H1 (cell line): ENCODE measurements at regions of chr14 and their contacts with region 1.

Region 1: DNA sequence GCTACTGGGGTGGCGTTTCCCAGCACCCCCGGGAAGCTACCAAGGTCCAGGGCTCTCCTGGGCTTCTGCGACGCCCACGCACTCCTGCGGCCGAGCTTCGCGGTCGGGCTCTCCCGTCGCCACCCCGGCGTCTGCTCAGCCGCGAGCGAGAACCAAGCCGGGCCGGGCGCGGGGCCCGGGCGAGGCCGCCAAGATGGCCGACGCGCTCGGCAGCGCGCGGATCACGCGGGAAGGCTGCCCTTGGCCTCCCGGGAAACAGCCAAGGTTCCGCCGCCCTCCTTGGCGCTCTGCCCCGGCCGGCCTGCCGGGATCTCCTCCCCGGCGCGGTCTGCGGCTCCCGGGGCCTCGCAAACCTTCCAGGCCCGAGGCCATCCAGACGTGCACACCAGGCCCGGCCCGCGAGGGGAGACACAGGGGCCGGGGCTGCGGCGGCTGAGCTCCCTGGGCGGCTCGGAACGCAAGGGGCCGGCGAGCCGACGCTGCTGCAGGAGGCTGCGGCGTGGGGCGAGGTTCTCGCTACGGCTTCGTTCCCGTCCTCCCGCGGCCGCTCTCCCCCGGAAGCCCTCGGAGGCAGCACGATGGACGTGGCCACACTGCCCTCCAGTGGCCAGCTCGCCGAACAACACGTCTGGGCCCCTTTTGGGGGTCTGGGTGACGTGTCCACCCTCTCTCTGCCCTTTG is 23.5 kb upstream of the ZFP36L1 start:
- DNase-seq: peak in 1 of 2 experiments; percentile 99
- H3K4me3 ChIP-seq: peak overlapping the region; percentile 3 to 59 (median 44); a peak in 7 of 8 replicates
- H3K27ac ChIP-seq: peak overlapping the region; percentile 76; the same call in 1 of the 2 replicates
- H3K4me1 ChIP-seq: peaks cover 6 to 37% (median 28%) of the 10 kb centered on the region in 4 experiments
- H3K27me3 ChIP-seq: peaks cover 0 to 3% (median 2%) of the 10 kb centered on the region in 4 experiments; a peak in 2 of 7 replicates
- CTCF ChIP-seq: peak; percentile 89 to 97 (median 91)
- EP300 ChIP-seq: no peak
- POLR2A ChIP-seq: peak in 1 of 2 experiments; percentile 40; a peak in 2 of 3 replicates
- RAD21 ChIP-seq: peak; percentile 99 to 100

Region 2: DNA sequence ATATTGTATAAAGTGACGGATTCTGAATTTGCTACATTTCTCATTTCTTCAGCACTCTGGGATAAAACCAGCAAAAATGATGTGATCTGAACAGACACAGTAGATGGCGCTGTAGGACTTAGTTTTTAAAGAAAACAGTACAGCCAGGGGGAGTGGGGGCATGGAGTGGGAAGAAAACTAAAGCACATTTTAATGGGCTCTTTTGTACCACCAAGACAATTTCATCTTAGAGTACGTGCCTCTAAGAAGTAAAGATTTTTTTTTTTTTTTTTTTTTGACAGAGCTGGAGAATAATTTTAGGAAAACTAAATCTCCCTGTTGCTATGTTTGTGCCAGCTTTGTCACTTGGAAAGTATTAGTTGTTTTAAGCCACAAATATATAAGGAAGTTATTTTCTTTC is 872.5 kb before region 1 on chr14:
- CTCF ChIA-PET with region 1: interaction called, 17 read pairs
- POLR2A ChIA-PET with region 1: no interaction called
- DNase-seq: peak; percentile 15 to 60
- H3K4me3 ChIP-seq: no peak overlapping the region
- H3K27ac ChIP-seq: no peak overlapping the region
- H3K4me1 ChIP-seq: peaks cover 4 to 15% (median 6%) of the 10 kb centered on the region in 4 experiments; a peak in 6 of 7 replicates
- H3K27me3 ChIP-seq: no peaks in the 10 kb centered on the region
- CTCF ChIP-seq: peak in 2 of 3 experiments; percentile 65 to 70; a peak in 3 of 4 replicates
- EP300 ChIP-seq: no peak
- POLR2A ChIP-seq: no peak
- RAD21 ChIP-seq: peak; percentile 93 to 94

Region 3: DNA sequence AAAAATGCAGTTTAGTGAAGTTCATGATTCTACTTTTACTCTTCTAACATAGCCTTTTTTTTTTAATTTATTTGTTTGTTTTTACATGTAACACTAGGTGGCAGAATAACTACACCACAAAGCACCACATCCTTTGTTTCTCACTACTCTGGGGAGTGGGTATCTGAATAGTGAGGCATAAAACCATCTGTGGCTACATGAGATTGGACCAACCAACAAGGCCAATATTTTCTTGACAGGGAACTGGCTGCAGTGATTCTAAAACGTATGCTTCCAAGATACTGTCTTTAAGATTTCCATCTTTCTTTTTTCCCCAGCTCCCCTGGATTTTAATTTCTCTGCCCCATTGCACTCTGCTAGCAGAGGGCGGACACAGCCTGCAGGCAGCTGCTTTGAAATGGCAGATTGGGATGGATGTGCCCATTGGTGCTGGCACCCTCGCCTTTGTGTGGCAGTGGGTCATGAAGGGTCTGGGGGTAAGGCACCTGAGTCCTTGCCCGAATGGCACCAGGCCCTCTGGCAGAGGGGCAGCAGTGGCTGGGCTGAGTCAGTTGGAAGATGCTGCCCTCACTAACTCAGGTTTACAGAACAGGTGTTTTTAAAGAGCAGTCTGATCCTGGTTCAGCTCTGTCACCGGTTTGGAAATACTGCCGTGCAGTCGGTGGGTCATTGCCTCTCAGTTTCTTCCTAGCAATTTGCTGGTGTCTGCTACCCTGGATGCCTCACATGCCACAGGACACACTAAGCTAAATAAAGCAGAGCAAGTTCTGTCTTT is 567.7 kb before region 1 on chr14:
- CTCF ChIA-PET with region 1: interaction called, 76 read pairs
- POLR2A ChIA-PET with region 1: interaction called, 15 read pairs
- DNase-seq: peak in 1 of 2 experiments; percentile 65
- H3K4me3 ChIP-seq: no peak overlapping the region
- H3K27ac ChIP-seq: no peak overlapping the region
- H3K4me1 ChIP-seq: peaks cover 2 to 20% (median 13%) of the 10 kb centered on the region in 4 experiments; a peak in 5 of 7 replicates
- H3K27me3 ChIP-seq: no peaks in the 10 kb centered on the region
- CTCF ChIP-seq: peak in 2 of 3 experiments; percentile 48 to 49; a peak in 2 of 4 replicates
- EP300 ChIP-seq: no peak
- POLR2A ChIP-seq: no peak
- RAD21 ChIP-seq: peak; percentile 86 to 91

Region 4: DNA sequence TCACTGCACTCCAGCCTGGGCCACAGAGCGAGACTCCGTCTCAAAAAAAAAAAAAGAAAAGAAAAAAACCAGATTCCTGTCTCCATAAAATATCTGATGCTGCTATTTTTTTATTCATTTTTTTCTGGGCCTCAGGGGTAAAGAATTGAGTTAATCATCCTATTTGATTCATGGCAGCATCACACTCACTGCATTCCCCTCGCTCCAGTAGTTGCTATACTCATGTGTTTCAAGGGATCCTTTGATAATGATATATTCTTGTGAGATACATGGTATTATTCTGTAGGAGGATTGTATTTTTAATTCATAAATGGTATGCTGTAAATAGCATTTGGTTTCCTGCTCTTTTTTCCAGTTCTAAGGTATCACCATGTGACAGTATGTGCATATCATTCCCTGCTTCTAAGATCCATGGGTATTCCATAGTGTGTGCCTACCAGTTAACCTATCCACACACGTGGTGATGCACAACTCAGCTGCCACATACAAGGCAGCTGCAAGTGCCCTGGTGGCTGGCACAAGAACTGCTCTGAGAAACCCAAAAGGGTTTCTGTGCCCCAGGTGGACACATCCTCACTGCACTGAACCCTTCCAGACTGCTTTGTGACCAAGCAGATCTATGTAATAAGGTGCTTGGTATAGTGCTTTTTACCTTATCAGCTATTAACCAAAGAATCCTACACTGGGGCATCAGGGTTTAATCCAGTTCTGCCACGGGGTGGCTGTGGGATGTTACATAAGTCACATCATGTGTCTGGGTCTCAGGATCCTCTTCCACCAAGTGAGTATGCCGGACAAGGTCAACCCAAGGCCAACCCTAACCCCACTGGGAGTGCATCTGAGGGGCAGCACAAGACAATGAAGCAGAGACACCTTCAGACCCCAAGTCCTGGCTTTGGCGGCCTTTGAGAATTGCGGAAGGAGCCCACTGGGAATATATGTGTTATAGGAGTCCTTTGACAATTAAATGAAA is 98.1 kb before region 1 on chr14:
- CTCF ChIA-PET with region 1: interaction called, 12 read pairs
- POLR2A ChIA-PET with region 1: interaction called, 3 read pairs
- DNase-seq: no peak
- H3K4me3 ChIP-seq: no peak overlapping the region
- H3K27ac ChIP-seq: no peak overlapping the region
- H3K4me1 ChIP-seq: no peaks in the 10 kb centered on the region; a peak in 1 of 7 replicates
- H3K27me3 ChIP-seq: no peaks in the 10 kb centered on the region; a peak in 2 of 7 replicates
- CTCF ChIP-seq: peak; percentile 53 to 77 (median 65)
- EP300 ChIP-seq: no peak
- POLR2A ChIP-seq: no peak
- RAD21 ChIP-seq: peak; percentile 36 to 55; a peak in 3 of 4 replicates

Region 5: DNA sequence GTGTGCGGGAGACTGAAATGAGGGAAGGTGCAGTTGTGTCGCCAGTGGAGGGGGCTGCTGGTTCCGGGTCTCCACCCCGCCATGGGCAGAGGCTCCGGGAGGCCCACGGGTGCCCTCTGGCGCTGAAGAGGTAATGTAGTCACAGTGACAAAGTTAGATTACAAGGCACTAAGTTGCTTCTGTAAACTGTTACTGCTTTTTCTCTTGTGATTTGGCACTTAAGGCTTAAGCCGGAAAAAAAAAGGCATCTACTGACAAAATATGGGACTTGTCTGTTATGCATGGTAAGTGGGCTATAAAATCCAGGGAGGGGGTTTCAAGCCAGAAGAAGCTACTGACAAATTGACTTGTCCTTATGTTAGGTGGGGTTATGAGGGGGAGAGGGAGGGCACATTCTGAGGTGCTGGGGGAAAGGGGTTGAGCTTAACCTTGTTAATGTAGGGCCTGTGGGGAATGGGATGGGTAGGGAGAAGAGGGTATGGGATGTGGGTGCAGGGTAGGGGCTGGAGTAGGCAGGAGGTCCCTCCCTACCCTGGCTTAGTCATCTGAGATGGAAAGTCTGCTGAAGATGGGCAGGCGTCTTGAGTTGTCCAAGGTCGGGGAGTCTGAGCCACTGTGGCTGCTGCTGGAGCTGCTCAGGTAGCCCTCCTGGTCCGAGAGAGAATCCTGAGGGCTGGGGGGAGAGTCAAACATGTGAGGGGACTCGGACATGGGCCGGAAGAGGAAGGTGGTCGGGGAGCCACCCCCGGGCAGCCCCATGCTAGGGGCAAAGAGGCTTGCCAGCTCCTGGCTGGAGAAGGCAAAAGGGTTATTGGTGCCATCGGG is 27.2 kb before region 1 on chr14:
- CTCF ChIA-PET with region 1: interaction called, 60 read pairs
- POLR2A ChIA-PET with region 1: interaction called, 222 read pairs
- DNase-seq: peak in 1 of 2 experiments; percentile 71
- H3K4me3 ChIP-seq: peak overlapping the region in 3 of 4 experiments; percentile 9 to 91 (median 14); a peak in 3 of 8 replicates
- H3K27ac ChIP-seq: no peak overlapping the region
- H3K4me1 ChIP-seq: peaks cover 0 to 22% (median 12%) of the 10 kb centered on the region in 4 experiments; a peak in 6 of 7 replicates
- H3K27me3 ChIP-seq: no peaks in the 10 kb centered on the region
- CTCF ChIP-seq: peak; percentile 63 to 94 (median 67)
- EP300 ChIP-seq: no peak
- POLR2A ChIP-seq: no peak; a peak in 1 of 3 replicates
- RAD21 ChIP-seq: peak; percentile 71 to 79

Region 6: DNA sequence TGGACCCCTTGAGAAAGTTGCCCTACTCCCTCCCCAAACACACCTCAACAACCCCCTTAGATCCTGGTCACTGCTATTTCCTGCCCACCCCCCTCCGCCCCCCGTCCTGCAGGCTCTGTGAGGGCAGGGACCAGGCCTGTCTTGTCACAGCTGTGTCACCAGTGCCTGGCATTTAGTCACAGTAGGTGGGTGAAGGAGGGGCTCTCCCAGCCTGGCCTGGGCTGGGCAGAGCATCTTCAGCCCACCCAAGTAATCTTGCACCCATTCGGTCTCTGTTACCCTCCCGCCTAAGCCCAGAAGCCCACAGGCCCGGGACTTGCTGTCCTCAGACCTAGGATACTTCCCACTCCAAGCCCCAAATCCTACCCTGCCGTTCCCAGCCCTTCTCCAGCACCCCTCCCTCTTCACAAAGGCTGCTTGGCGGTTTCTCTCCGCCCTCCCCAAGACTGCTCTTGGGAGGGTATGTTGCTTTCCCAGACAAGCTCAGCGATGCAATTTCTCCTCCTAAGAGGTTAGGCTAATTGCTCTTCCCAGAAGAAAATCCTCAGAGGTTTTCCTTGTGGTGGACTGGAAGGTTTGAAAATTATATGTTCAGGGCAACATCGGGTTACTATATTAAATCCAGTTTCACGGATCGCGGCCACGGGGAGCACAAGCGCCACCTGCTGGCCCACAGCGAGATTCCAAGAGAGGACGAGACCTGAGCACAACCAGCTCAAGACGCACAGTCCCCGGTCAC is 27.2 kb after region 1 on chr14:
- CTCF ChIA-PET with region 1: interaction called, 10 read pairs
- POLR2A ChIA-PET with region 1: no interaction called
- DNase-seq: peak; percentile 50 to 89
- H3K4me3 ChIP-seq: peak overlapping the region; percentile 38 to 63 (median 56); a peak in 7 of 8 replicates
- H3K27ac ChIP-seq: no peak overlapping the region
- H3K4me1 ChIP-seq: peaks cover 0 to 6% (median 3%) of the 10 kb centered on the region in 4 experiments; a peak in 5 of 7 replicates
- H3K27me3 ChIP-seq: no peaks in the 10 kb centered on the region
- CTCF ChIP-seq: peak; percentile 78 to 93 (median 87)
- EP300 ChIP-seq: no peak
- POLR2A ChIP-seq: peak in 1 of 2 experiments; percentile 24; a peak in 1 of 3 replicates
- RAD21 ChIP-seq: peak; percentile 76 to 82